ENCODE measurements at regions of chr16 and their contacts with region 1.

Region 1: DNA sequence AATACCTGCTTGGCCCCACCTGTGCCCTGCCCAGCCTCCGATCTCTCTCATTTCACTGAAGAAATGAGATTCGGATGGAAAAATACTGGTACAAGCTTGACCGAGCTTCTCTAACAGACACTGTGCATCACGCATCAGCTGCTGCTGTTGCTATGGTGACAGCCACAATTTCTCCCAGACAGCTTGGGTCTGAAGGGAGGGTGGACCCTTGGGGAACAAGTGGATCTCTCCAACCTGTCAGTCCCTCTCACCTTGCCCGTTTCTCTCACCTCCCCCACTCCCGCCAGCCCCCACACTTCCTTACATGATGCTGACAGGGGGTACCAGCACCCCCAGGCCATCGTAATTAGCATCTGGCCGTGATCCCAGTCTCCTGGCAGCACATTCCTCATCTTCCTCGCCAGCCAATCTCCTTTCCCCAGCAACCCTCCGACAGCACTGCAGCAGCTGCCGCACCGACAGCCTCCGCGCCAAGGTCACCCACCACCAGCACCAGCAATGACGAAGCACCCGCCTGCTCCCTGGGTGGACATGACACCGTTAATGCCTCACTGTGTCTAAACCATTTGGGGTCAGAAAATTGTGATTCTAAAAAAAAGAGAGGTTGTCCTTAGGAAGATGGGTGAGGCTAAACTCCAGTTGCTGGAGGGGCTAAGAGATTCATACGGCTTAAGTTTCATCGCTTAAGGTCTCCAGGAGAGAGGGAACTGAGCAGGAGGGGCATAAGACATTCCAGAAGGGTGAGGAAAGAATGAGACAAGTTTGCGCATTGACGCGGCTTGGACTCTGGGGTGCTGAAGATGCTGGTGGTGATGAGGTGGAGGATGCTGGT is 58.6 kb upstream of the TNRC6A start:
- DNase-seq: peak; percentile 68 to 82
- ATAC-seq: peak; percentile 76 to 81
- H3K4me3 ChIP-seq: no peak overlapping the region
- H3K27ac ChIP-seq: peak overlapping the region; percentile 29 to 88
- H3K4me1 ChIP-seq: peaks cover 35% of the 10 kb centered on the region
- CTCF ChIP-seq: no peak
- EP300 ChIP-seq: no peak
- POLR2A ChIP-seq: no peak
- RAD21 ChIP-seq: no peak

Region 2: GRCh38 chr16:24689145-24689544 is 18.3 kb after region 1 on chr16:
- CTCF ChIA-PET with region 1: interaction called, 14 read pairs
- POLR2A ChIA-PET with region 1: no interaction called
- DNase-seq: peak; percentile 60 to 85
- ATAC-seq: peak; percentile 89 to 91
- H3K4me3 ChIP-seq: no peak overlapping the region
- H3K27ac ChIP-seq: peak overlapping the region; percentile 25 to 67; a peak in 5 of 6 replicates
- H3K4me1 ChIP-seq: peaks cover 18% of the 10 kb centered on the region
- CTCF ChIP-seq: peak; percentile 82
- EP300 ChIP-seq: no peak
- POLR2A ChIP-seq: no peak
- RAD21 ChIP-seq: peak; percentile 78 to 85

Measured in A549 (cell line).